Heart right ventricle (tissue), 16 donors: ENCODE measurements at regions of chr2 and their contacts with region 1.

Region 1: DNA sequence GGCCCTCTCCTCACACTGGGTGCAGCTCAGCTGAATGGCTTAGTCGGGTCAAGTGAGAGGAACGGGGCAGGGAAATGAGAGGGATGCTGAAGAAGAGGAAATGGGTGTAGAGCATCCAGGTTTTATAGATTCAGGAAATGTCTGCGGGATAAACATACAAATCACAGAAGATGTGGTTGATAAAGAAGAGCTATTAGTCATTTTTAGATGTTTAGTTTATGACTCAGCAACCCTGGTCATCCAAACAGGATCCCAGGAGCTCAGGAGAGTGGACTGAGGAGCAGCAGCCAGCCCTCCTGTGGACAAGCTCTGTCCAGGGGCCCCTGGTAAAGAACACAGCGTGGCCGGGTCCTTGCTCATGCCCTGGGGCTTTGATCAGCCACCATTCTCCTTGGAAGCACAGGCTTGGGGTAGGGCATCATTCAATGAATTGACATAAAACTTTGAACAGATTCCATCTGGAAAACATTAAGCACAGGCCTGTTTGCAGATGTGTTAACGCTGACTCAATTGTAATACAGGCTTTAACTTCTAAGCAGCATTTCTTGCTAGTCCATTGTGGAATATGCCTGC is 83.0 kb downstream of the NPAS2 start:
- DNase-seq: no peak
- ATAC-seq: peak in 5 of 8 donors; percentile 35 to 59 (median 35)
- H3K4me3 ChIP-seq: no peak overlapping the region
- H3K27ac ChIP-seq: peak overlapping the region in 2 of 10 donors; percentile 47 to 83
- H3K4me1 ChIP-seq: peaks cover 12 to 53% (median 27%) of the 10 kb centered on the region in 9 donors
- H3K27me3 ChIP-seq: no peaks in the 10 kb centered on the region
- CTCF ChIP-seq: peak in 1 of 9 donors; percentile 4

Region 2: DNA sequence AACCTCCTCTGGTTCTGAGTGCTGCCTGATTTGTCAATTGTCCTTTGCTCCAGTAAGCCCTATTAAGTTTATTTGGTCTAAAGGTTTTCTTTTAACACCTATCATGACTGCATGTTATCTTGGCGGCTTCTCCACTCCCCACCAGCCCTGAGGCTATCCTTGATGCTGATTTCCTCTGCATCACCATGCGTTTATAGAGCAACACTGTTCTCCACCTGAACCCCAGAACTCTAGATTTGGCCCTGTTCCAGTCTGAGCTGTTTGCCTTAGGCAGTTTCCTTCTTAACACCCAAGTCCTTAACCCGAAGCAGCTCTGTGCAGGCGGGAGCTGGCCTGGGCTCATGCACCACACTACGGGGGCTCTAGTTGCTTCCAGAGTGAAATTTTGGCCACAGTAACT is 181.2 kb before region 1 on chr2:
- intact Hi-C with region 1: no loop called
- DNase-seq: no peak
- ATAC-seq: no peak
- H3K4me3 ChIP-seq: no peak overlapping the region
- H3K27ac ChIP-seq: no peak overlapping the region
- H3K4me1 ChIP-seq: no peaks in the 10 kb centered on the region
- H3K27me3 ChIP-seq: no peaks in the 10 kb centered on the region
- CTCF ChIP-seq: no peak

Region 3: DNA sequence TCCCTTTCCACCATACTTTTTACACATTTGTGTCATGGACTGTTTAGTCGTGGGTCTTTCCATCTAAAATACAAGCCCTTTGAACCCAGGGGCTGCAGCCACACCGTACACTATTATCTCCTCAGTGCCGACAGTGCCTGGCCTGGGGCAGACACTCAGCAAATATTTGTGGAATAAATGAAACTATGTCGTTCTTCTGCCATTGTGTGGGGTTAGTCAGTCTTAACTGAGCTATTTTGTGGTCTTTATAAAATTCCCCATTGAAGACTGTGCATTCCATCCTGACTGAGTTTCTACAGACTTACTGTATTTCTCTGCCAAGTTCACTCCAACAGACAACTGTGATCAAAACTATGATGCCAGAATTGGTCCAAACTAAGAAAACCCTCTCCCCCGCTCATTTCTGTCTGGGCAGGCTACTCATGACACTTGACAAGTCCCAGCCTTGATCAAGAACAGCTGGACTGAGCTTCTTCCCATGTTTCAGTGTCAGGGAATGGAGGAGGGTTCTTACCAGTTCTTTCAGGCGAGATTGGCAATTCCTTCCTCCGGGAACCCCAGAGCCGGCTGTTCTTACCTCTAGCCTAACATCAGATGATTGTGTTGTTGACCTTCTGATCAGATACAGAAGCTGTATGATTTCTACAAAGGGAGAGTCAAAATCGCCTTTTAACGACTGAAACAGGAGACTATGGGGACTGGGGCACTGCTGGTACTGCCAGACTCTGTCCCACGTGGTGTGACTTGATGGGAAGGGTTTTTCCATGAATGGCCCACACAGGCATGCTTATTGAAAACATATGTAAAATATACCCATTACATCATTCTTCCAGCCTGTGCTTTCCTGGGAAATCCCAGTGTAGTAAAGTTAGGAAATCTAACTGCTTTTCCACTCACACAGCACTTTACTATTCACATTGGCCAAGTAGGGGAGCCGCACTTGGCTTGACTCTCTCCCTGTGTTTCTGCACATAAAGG is 160.4 kb before region 1 on chr2:
- intact Hi-C with region 1: loop called in 1 of 10 experiments (anchors 10 kb)
- DNase-seq: peak in 1 of 2 donors; percentile 35
- ATAC-seq: peak; percentile 76 to 85 (median 84)
- H3K4me3 ChIP-seq: no peak overlapping the region
- H3K27ac ChIP-seq: peak overlapping the region in 6 of 10 donors; percentile 26 to 75 (median 54)
- H3K4me1 ChIP-seq: peaks cover 0 to 12% (median 0%) of the 10 kb centered on the region in 9 donors
- H3K27me3 ChIP-seq: no peaks in the 10 kb centered on the region
- CTCF ChIP-seq: no peak

Region 4: GRCh38 chr2:100957996-100958653 is 55.2 kb after region 1 on chr2:
- intact Hi-C with region 1: no loop called
- DNase-seq: peak in 1 of 2 donors; percentile 42
- ATAC-seq: peak; percentile 43 to 84 (median 66)
- H3K4me3 ChIP-seq: no peak overlapping the region
- H3K27ac ChIP-seq: peak overlapping the region in 1 of 10 donors; percentile 52
- H3K4me1 ChIP-seq: peaks cover 4 to 46% (median 33%) of the 10 kb centered on the region in 9 donors
- H3K27me3 ChIP-seq: no peaks in the 10 kb centered on the region
- CTCF ChIP-seq: no peak

Region 5: DNA sequence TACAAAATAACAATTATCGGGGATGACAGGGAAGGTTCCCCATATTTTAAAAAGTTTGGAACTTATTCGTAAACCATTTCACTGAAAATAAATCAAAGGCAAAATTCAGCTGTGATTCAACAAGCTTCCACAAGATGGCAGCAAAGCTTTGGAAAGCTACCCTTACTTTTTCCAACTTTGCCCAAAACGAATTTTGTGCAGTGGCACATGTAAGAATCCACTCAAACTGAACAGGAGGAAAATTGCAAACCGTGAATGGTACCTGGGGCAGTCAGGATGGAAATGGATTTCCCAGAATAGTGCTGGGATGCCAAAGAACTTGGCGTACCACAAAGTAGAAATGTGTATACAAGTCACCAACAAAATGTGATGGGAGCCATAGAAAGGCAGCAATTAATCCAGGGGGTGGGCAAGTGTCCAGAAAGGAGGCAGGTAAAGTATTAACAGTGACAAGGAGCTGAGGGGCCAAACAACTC is 109.8 kb after region 1 on chr2:
- intact Hi-C with region 1: no loop called
- DNase-seq: peak in 1 of 2 donors; percentile 26
- ATAC-seq: no peak
- H3K4me3 ChIP-seq: no peak overlapping the region
- H3K27ac ChIP-seq: no peak overlapping the region
- H3K4me1 ChIP-seq: peaks cover 0 to 8% (median 0%) of the 10 kb centered on the region in 9 donors
- H3K27me3 ChIP-seq: no peaks in the 10 kb centered on the region
- CTCF ChIP-seq: peak; percentile 73 to 91 (median 81)